Calu3 (cell line): ENCODE measurements at regions of chr15 and their contacts with region 1.

Region 1: DNA sequence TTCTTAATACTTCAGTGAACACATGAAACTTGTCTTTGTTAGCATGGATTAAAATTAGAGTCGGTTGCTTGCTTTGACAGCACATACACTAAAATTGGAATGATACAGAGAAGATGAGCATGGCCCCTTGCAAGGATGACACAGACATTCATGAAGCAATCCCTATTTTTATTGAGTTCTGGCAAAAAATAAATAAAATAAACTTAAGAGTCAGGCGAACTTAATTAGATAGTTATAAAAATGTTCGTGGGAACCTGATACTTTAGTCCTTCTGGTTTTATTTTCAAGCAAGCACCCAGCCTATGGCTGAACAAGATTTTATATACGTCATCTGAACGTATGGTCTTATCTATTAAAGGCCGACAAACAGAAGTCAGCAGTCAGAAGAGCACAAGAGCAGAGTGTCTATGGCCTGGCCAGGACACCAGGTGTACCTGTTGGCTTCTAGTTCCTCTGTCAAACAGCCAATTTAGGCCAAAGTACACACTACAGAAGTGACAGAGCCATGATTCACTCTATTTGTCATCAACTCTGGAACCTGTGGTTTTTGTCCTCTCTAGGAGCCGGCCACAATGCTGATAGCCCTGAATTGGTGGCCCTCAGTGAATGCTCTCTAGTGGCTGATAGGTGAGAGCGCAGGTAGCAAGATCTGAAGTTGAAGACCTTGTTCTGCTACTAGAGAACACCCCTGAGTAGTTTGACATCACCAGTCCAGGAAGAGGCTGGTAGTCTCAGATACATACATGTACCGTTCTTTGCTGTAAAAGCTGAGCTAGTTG is 64.3 kb downstream of the LEO1 start:
- DNase-seq: peak; percentile 80
- H3K4me3 Mint-ChIP-seq: no peak overlapping the region
- H3K27ac Mint-ChIP-seq: peak overlapping the region; percentile 82
- H3K4me1 Mint-ChIP-seq: peaks cover 22% of the 10 kb centered on the region
- H3K27me3 Mint-ChIP-seq: no peaks in the 10 kb centered on the region
- CTCF ChIP-seq: peak; percentile 30

Region 2: GRCh38 chr15:51382787-51383186 is 524.5 kb before region 1 on chr15:
- CTCF ChIA-PET with region 1: no interaction called
- intact Hi-C with region 1: no loop called
- DNase-seq: peak; percentile 62
- H3K4me3 Mint-ChIP-seq: no peak overlapping the region
- H3K27ac Mint-ChIP-seq: no peak overlapping the region
- H3K4me1 Mint-ChIP-seq: no peaks in the 10 kb centered on the region
- H3K27me3 Mint-ChIP-seq: peaks cover 96% of the 10 kb centered on the region
- CTCF ChIP-seq: peak; percentile 49

Region 3: DNA sequence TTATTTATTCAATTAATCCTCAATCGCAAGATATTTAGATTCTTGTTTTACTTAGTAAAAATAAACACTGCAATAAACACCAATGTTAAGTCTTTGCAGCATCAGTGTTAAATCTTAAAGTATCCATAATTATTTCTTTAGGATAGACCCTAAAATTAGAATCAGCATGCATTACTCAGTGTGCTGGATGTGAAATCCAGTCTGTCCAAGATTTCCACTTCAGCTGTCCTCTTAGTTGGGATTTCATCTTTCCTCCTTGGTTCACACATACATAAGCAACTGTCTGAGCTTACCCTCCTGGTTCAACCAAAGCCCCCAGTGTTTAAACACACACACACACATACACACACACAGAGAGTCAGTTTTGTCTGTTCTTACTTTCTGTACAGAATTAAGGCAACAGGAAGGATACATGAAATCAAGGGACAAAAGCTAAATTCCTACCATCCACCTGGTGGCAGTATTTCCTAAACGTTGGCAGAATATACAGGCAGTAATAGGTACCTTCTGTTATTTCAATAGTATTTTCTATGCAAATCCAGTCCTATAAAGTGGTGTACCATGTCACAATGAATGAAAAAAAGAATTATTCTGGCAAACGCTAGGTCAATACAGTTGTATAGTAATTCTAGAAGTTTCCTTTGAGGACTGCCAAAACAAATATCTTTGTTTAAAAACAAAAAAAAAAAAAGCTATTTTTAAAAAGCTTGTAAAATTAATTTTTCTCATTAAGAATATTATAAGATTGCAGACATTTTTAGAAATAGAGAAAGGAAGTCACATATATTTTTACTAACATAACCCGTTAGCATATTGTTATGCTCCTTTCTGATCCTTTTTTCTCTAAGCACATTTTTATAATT is 257.4 kb before region 1 on chr15:
- CTCF ChIA-PET with region 1: no interaction called
- intact Hi-C with region 1: loop called (anchors 5 kb)
- DNase-seq: peak; percentile 59
- H3K4me3 Mint-ChIP-seq: no peak overlapping the region
- H3K27ac Mint-ChIP-seq: no peak overlapping the region
- H3K4me1 Mint-ChIP-seq: no peaks in the 10 kb centered on the region
- H3K27me3 Mint-ChIP-seq: peaks cover 30% of the 10 kb centered on the region
- CTCF ChIP-seq: peak; percentile 49

Region 4: GRCh38 chr15:51782357-51782896 is 124.9 kb before region 1 on chr15:
- CTCF ChIA-PET with region 1: no interaction called
- intact Hi-C with region 1: loop called (anchors 1 kb)
- DNase-seq: peak; percentile 12
- H3K4me3 Mint-ChIP-seq: no peak overlapping the region
- H3K27ac Mint-ChIP-seq: no peak overlapping the region
- H3K4me1 Mint-ChIP-seq: no peaks in the 10 kb centered on the region
- H3K27me3 Mint-ChIP-seq: no peaks in the 10 kb centered on the region
- CTCF ChIP-seq: no peak

Region 5: GRCh38 chr15:51796845-51797401 is 110.4 kb before region 1 on chr15:
- CTCF ChIA-PET with region 1: interaction called, 3 read pairs
- intact Hi-C with region 1: loop called (anchors 5 kb)
- DNase-seq: no peak
- H3K4me3 Mint-ChIP-seq: no peak overlapping the region
- H3K27ac Mint-ChIP-seq: no peak overlapping the region
- H3K4me1 Mint-ChIP-seq: no peaks in the 10 kb centered on the region
- H3K27me3 Mint-ChIP-seq: no peaks in the 10 kb centered on the region
- CTCF ChIP-seq: no peak

Region 6: GRCh38 chr15:51829360-51830275 is 77.7 kb before region 1 on chr15 and contains the start of gene TMOD3:
- CTCF ChIA-PET with region 1: no interaction called
- intact Hi-C with region 1: loop called (anchors 2 kb)
- DNase-seq: peak; percentile 94
- H3K4me3 Mint-ChIP-seq: peak within 1 kb of the TSS; percentile 95
- H3K27ac Mint-ChIP-seq: peak within 1 kb of the TSS; percentile 91
- H3K4me1 Mint-ChIP-seq: peaks cover 50% of the 10 kb centered on the region
- H3K27me3 Mint-ChIP-seq: no peaks in the 10 kb centered on the region
- CTCF ChIP-seq: no peak
- total RNA-seq, gene TMOD3: 53.6 and 60.1 TPM in 2 replicates